Calu3 (cell line): ENCODE measurements at regions of chr12 and their contacts with region 1.

Region 1: DNA sequence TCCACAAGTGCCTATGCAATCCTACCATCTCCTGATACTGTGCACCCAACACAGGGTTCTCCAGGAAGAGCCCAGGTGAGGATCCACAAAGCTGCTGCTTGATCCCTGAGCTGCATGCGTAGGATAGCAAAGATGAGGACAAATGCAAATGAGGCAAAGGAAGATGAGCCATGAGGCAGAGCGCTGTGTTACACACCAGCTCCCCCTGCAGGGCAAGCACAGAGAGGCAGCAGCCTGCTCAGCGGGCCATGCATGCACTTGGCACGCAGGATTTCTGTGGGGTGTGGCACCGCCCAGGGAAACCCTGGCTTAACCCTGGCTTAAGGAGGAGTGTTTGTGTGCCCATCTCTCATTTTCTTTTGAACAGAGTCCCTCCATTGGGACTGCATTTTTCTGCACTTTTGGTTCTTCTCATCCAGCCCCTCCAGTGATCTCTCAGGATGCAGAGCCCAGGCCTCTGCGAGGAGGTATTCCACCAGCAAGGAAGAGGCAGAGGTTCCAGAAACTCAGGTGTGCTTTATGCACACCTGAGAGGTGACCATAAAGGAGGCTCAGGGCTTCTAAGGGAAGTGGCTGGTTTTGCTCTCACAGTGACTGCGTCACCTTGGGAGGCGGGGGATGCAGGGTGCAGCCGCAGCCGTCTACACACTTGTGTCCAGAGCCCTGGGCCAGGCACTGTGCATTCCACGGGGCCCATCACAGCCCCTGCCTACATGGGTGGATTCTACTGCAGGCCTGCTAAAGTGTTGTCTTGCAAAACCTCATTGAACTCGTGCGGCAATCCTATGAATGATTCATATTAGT is 973.3 kb upstream of the TMEM132C start:
- DNase-seq: peak; percentile 38
- H3K4me3 Mint-ChIP-seq: no peak overlapping the region
- H3K27ac Mint-ChIP-seq: no peak overlapping the region
- H3K4me1 Mint-ChIP-seq: no peaks in the 10 kb centered on the region
- H3K27me3 Mint-ChIP-seq: no peaks in the 10 kb centered on the region
- CTCF ChIP-seq: no peak

Region 2: GRCh38 chr12:127115468-127116035 is 178.2 kb before region 1 on chr12:
- CTCF ChIA-PET with region 1: no interaction called
- intact Hi-C with region 1: loop called (anchors 10 kb)
- DNase-seq: no peak
- H3K4me3 Mint-ChIP-seq: no peak overlapping the region
- H3K27ac Mint-ChIP-seq: no peak overlapping the region
- H3K4me1 Mint-ChIP-seq: no peaks in the 10 kb centered on the region
- H3K27me3 Mint-ChIP-seq: no peaks in the 10 kb centered on the region
- CTCF ChIP-seq: no peak

Region 3: GRCh38 chr12:127696963-127697362 is 403.3 kb after region 1 on chr12:
- CTCF ChIA-PET with region 1: no interaction called
- intact Hi-C with region 1: no loop called
- DNase-seq: no peak
- H3K4me3 Mint-ChIP-seq: no peak overlapping the region
- H3K27ac Mint-ChIP-seq: no peak overlapping the region
- H3K4me1 Mint-ChIP-seq: no peaks in the 10 kb centered on the region
- H3K27me3 Mint-ChIP-seq: no peaks in the 10 kb centered on the region
- CTCF ChIP-seq: no peak

Region 4: GRCh38 chr12:128069359-128069997 is 775.8 kb after region 1 on chr12:
- CTCF ChIA-PET with region 1: no interaction called
- intact Hi-C with region 1: no loop called
- DNase-seq: peak; percentile 41
- H3K4me3 Mint-ChIP-seq: no peak overlapping the region
- H3K27ac Mint-ChIP-seq: no peak overlapping the region
- H3K4me1 Mint-ChIP-seq: no peaks in the 10 kb centered on the region
- H3K27me3 Mint-ChIP-seq: no peaks in the 10 kb centered on the region
- CTCF ChIP-seq: no peak